CD4-positive, alpha-beta T cell (primary cell): ENCODE measurements at regions of chr5 and their contacts with region 1.

Region 1: DNA sequence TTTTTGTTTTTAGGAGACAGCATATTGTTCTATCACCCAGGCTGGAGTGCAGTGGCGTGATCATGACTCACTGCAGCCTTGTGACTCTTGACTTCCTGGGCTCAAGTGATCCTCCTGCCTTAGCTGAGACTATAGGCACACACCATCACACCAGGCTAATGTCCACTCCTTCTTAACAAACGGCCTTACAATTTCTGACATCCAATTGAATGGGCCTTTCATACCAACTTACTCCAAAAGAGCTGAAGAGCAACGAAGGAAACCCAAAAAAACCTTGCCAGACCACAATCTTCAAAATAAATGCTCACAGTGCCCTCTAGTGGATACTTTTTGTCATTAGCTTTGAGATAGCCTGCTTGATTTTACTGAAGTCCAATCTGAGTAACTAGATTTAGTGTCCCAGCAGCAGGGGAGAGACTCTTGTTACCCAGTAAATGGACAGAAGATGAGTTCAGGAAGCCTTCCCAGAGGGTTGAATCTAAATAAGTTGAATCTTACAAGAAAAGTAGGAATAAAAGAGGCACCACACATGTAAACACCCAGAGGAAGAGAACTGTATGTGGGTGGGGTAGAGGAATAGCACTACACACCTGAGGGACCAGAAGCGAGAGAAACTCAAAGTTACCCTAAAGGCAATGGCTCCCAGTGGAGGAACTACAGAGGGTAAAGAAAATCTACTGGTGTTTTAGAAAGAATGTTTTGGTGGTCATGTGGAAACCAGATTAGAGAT is 9.3 kb downstream of the ZNF622 start:
- DNase-seq: peak in 5 of 14 experiments; percentile 10 to 81 (median 74)
- ATAC-seq: peak; percentile 76
- H3K4me3 ChIP-seq: no peak overlapping the region
- H3K4me3 Mint-ChIP-seq: peak overlapping the region; percentile 47
- H3K27ac ChIP-seq: no peak overlapping the region
- H3K27ac Mint-ChIP-seq: peak overlapping the region; percentile 71
- H3K4me1 ChIP-seq: peaks cover 12% of the 10 kb centered on the region
- H3K4me1 Mint-ChIP-seq: peaks cover 75% of the 10 kb centered on the region
- H3K27me3 ChIP-seq: no peaks in the 10 kb centered on the region
- H3K27me3 Mint-ChIP-seq: no peaks in the 10 kb centered on the region
- CTCF ChIP-seq: peak; percentile 85

Region 2: DNA sequence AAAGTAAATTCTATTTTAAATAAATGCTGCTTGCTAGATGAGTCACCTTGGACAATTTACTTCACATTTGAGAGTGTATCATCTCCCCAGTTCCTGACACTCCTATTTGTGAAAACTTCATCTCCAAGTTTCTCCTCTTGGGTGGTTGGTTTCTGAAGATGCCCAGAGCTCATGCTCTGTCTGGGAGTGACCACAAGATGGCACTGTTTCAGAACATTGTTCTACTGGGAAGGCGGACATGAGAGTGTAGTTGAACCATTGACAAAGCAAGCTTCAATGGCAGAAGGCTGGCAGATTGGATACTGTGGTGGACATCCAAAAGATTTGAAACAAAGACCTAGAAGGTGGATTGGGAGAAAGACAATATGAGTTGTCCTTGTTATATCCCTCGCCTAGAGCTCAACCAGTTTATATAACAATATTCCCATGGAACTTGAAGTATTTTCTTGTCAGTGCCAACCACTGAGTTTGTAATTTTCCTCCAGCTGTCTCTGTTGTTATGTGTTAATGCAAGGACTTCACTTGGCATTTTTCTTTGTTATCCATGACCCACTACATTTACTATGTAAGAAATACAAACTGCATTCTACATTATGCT is 1350.4 kb before region 1 on chr5:
- CTCF ChIA-PET with region 1: interaction called, 5 read pairs
- POLR2A ChIA-PET with region 1: no interaction called
- intact Hi-C with region 1: loop called in 1 of 2 experiments (anchors 5 kb)
- DNase-seq: peak in 4 of 14 experiments; percentile 11 to 36 (median 28)
- ATAC-seq: peak; percentile 34
- H3K4me3 ChIP-seq: no peak overlapping the region
- H3K4me3 Mint-ChIP-seq: no peak overlapping the region
- H3K27ac ChIP-seq: no peak overlapping the region
- H3K27ac Mint-ChIP-seq: no peak overlapping the region
- H3K4me1 ChIP-seq: no peaks in the 10 kb centered on the region
- H3K4me1 Mint-ChIP-seq: peaks cover 12% of the 10 kb centered on the region
- H3K27me3 ChIP-seq: no peaks in the 10 kb centered on the region
- H3K27me3 Mint-ChIP-seq: no peaks in the 10 kb centered on the region
- CTCF ChIP-seq: peak; percentile 55

Region 3: DNA sequence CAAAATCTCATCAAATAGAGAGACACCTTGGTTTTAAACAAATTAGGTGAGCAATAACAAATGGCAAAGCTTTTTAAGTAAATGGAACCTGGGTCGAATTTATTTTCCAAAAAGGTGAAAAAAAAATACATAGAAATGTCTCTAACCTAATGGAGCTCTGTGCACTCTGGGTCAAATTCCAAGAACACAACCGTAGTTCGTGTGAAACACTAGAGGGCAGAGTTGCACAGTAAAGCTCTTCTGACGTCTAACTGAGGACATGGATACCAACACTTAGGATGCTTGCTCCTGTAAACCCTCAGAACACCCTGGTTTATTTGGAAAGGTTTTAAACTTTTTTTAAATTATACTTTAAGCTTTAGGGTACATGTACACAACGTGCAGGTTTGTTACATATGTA is 295.6 kb before region 1 on chr5:
- CTCF ChIA-PET with region 1: interaction called, 3 read pairs
- POLR2A ChIA-PET with region 1: no interaction called
- intact Hi-C with region 1: loop called (anchors 5 kb)
- DNase-seq: peak in 3 of 14 experiments; percentile 17 to 33 (median 30)
- ATAC-seq: no peak
- H3K4me3 ChIP-seq: no peak overlapping the region
- H3K4me3 Mint-ChIP-seq: no peak overlapping the region
- H3K27ac ChIP-seq: no peak overlapping the region
- H3K27ac Mint-ChIP-seq: no peak overlapping the region
- H3K4me1 ChIP-seq: no peaks in the 10 kb centered on the region
- H3K4me1 Mint-ChIP-seq: no peaks in the 10 kb centered on the region
- H3K27me3 ChIP-seq: no peaks in the 10 kb centered on the region
- H3K27me3 Mint-ChIP-seq: peaks cover 5% of the 10 kb centered on the region
- CTCF ChIP-seq: peak; percentile 52